ENCODE measurements at regions of chr1 and their contacts with region 1.

Region 1: GRCh38 chr1:214537219-214537618 is 14.2 kb downstream of the PTPN14 start:
- DNase-seq: no peak
- H3K4me3 ChIP-seq: no peak overlapping the region
- H3K27ac ChIP-seq: peak overlapping the region; percentile 14 to 76 (median 42)
- H3K4me1 ChIP-seq: peaks cover 0 to 60% (median 51%) of the 10 kb centered on the region in 4 donors
- H3K27me3 ChIP-seq: no peaks in the 10 kb centered on the region
- CTCF ChIP-seq: no peak
- EP300 ChIP-seq: no peak
- POLR2A ChIP-seq: no peak

Region 2: GRCh38 chr1:214261206-214262123 is 275.8 kb before region 1 on chr1:
- intact Hi-C with region 1: no loop called
- DNase-seq: peak; percentile 88
- H3K4me3 ChIP-seq: no peak overlapping the region
- H3K27ac ChIP-seq: no peak overlapping the region
- H3K4me1 ChIP-seq: peaks cover 0 to 6% (median 0%) of the 10 kb centered on the region in 4 donors
- H3K27me3 ChIP-seq: peaks cover 0 to 44% (median 5%) of the 10 kb centered on the region in 3 donors
- CTCF ChIP-seq: peak; percentile 76 to 95 (median 84)
- EP300 ChIP-seq: no peak
- POLR2A ChIP-seq: no peak

Region 3: GRCh38 chr1:214494706-214495105 is 42.5 kb before region 1 on chr1:
- intact Hi-C with region 1: loop called (anchors 5 kb)
- DNase-seq: no peak
- H3K4me3 ChIP-seq: no peak overlapping the region
- H3K27ac ChIP-seq: peak overlapping the region in 3 of 4 donors; percentile 10 to 84 (median 69)
- H3K4me1 ChIP-seq: peaks cover 0 to 63% (median 31%) of the 10 kb centered on the region in 4 donors
- H3K27me3 ChIP-seq: no peaks in the 10 kb centered on the region
- CTCF ChIP-seq: no peak
- EP300 ChIP-seq: no peak
- POLR2A ChIP-seq: no peak

Measured in sigmoid colon (tissue), 7 donors.